ENCODE measurements at regions of chr2 and their contacts with region 1.

Region 1: DNA sequence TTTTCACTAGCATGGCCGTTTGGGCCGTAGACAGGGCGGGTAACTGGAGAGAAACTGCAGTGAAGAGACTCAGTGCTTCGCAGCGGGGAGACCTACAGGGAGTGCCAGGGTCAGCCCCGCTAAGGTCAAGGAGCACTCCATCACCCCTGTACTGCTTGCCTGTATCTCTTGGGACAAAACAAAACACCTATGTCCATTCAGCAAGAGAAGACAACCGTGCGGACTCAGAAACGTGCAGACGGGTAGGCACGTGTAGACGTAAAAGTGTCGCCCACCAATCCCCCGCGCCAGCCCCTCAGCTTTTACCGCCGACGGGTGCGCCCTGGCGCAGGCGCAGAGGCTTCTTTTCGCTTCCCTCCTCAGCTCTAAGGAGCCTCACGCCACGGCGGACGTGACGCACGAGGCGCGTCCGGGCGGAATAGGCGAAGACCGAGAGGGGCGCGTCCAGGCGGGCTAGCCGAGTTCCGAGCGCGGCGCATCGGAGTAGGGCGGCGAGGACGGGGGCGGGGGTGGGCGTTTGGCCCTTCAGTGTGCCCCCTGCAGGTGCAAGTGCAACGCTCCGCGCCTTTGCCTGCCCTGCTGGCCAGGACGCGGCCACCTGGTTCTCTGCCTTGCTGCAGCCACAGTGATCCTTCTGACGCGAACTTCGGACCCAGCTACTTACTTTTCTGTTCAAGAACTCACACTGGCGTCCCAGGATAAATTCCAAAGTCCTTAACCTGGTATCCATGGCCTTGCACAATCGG is 3.3 kb upstream of the SOS1 start:
- DNase-seq: peak; percentile 86 to 96 (median 94)
- H3K4me3 ChIP-seq: peak overlapping the region; percentile 54 to 99 (median 89)
- H3K27ac ChIP-seq: peak overlapping the region; percentile 5 to 95 (median 88)
- H3K27me3 ChIP-seq: no peaks in the 10 kb centered on the region
- CTCF ChIP-seq: peak; percentile 12 to 73 (median 60)

Region 2: GRCh38 chr2:38377050-38377828 is 746.9 kb before region 1 on chr2 and contains the start of gene ATL2:
- intact Hi-C with region 1: loop called in 1 of 2 experiments (anchors 10 kb)
- DNase-seq: peak; percentile 89 to 96 (median 95)
- H3K4me3 ChIP-seq: peak within 1 kb of the TSS; percentile 78 to 98 (median 90)
- H3K27ac ChIP-seq: peak within 1 kb of the TSS; percentile 65 to 98 (median 93)
- H3K27me3 ChIP-seq: no peaks in the 10 kb centered on the region
- CTCF ChIP-seq: peak in 11 of 56 donors; percentile 9 to 46 (median 20)
- total RNA-seq, gene ATL2: 36.1 to 104 (median 69.2) TPM

Region 3: GRCh38 chr2:39059366-39059952 is 64.7 kb before region 1 on chr2:
- intact Hi-C with region 1: loop called in 1 of 2 experiments (anchors 5 kb)
- DNase-seq: no peak
- H3K4me3 ChIP-seq: no peak overlapping the region
- H3K27ac ChIP-seq: no peak overlapping the region
- H3K27me3 ChIP-seq: no peaks in the 10 kb centered on the region
- CTCF ChIP-seq: peak; percentile 60 to 94 (median 80)

Region 4: GRCh38 chr2:39227628-39228412 is 103.6 kb after region 1 on chr2:
- intact Hi-C with region 1: loop called (anchors 2 to 5 kb)
- DNase-seq: peak; percentile 71 to 87 (median 76)
- H3K4me3 ChIP-seq: peak overlapping the region; percentile 6 to 71 (median 49)
- H3K27ac ChIP-seq: peak overlapping the region in 5 of 59 donors; percentile 9 to 44 (median 30)
- H3K27me3 ChIP-seq: no peaks in the 10 kb centered on the region
- CTCF ChIP-seq: peak; percentile 78 to 98 (median 90)

Region 5: GRCh38 chr2:39436592-39437510 is 312.7 kb after region 1 on chr2 and contains the start of gene MAP4K3:
- intact Hi-C with region 1: loop called (anchors 5 to 10 kb)
- DNase-seq: peak; percentile 75 to 94 (median 88)
- H3K4me3 ChIP-seq: peak within 1 kb of the TSS; percentile 54 to 99 (median 92)
- H3K27ac ChIP-seq: peak within 1 kb of the TSS; percentile 79 to 99 (median 95)
- H3K27me3 ChIP-seq: no peaks in the 10 kb centered on the region
- CTCF ChIP-seq: peak in 14 of 56 donors; percentile 1 to 44 (median 16)
- total RNA-seq, gene MAP4K3: 50.1 to 100 (median 72.2) TPM

Measured in dorsolateral prefrontal cortex (tissue), 120 donors.